ENCODE measurements at regions of chr22 and their contacts with region 1.

Region 1: GRCh38 chr22:35023692-35024363 is 42.1 kb upstream of the ISX start:
- DNase-seq: peak; percentile 45 to 73
- ATAC-seq: peak in 5 of 8 donors; percentile 51 to 75 (median 54)
- H3K4me3 ChIP-seq: no peak overlapping the region
- H3K27ac ChIP-seq: no peak overlapping the region
- H3K4me1 ChIP-seq: no peaks in the 10 kb centered on the region
- H3K27me3 ChIP-seq: peaks cover 5 to 55% (median 28%) of the 10 kb centered on the region in 7 donors
- CTCF ChIP-seq: peak; percentile 70 to 90 (median 87)

Region 2: DNA sequence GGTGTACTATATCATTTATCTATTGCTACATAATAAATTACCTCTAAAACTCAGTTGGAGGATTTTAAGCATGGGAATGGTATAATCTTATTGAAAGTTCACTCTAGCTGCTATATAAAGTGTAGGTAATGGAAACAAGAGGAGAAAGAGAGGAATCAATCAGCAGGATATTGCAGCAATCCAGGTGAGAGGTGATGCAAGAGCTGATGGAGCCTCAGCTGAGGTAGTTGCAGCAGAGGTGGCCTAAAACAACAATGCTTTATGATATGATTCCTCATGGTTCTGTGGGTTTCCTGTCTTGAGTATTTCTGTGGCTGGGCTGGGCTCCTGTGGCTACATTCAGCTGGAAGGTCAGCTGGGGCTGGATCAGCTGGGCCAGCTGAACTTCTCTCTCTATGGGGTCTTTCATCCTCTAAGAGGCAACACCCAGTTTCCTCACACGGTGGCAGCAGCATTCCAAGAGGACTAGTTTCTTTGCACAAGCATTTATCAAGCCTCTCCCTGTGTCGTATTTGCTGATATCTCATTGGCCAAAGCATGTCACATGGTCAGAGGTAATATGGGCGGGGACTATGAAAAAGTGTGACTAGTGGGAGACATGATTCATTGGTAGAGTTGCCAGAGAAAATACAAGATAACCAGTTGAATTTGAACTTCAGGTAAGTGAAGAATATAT is 968.2 kb before region 1 on chr22:
- intact Hi-C with region 1: loop called in 1 of 10 experiments (anchors 5 kb)
- DNase-seq: no peak
- ATAC-seq: peak in 1 of 8 donors; percentile 27
- H3K4me3 ChIP-seq: no peak overlapping the region
- H3K27ac ChIP-seq: no peak overlapping the region
- H3K4me1 ChIP-seq: no peaks in the 10 kb centered on the region
- H3K27me3 ChIP-seq: peaks cover 0 to 17% (median 0%) of the 10 kb centered on the region in 7 donors
- CTCF ChIP-seq: peak in 5 of 9 donors; percentile 11 to 29 (median 20)

Region 3: GRCh38 chr22:34414484-34415440 is 609.1 kb before region 1 on chr22:
- intact Hi-C with region 1: loop called in 5 of 10 experiments (anchors 5 to 10 kb)
- DNase-seq: peak in 1 of 2 donors; percentile 12
- ATAC-seq: peak in 3 of 8 donors; percentile 47 to 75 (median 48)
- H3K4me3 ChIP-seq: no peak overlapping the region
- H3K27ac ChIP-seq: no peak overlapping the region
- H3K4me1 ChIP-seq: no peaks in the 10 kb centered on the region
- H3K27me3 ChIP-seq: peaks cover 0 to 18% (median 0%) of the 10 kb centered on the region in 7 donors
- CTCF ChIP-seq: peak in 7 of 9 donors; percentile 33 to 56 (median 48)

Region 4: GRCh38 chr22:35076630-35077029 is 52.8 kb after region 1 on chr22:
- intact Hi-C with region 1: no loop called
- DNase-seq: no peak
- ATAC-seq: no peak
- H3K4me3 ChIP-seq: no peak overlapping the region
- H3K27ac ChIP-seq: no peak overlapping the region
- H3K4me1 ChIP-seq: no peaks in the 10 kb centered on the region
- H3K27me3 ChIP-seq: peaks cover 0 to 17% (median 4%) of the 10 kb centered on the region in 7 donors
- CTCF ChIP-seq: no peak

Region 5: GRCh38 chr22:35150183-35151107 is 126.6 kb after region 1 on chr22:
- intact Hi-C with region 1: loop called in 1 of 10 experiments (anchors 5 kb)
- DNase-seq: peak; percentile 50 to 58
- ATAC-seq: peak; percentile 28 to 81 (median 64)
- H3K4me3 ChIP-seq: no peak overlapping the region
- H3K27ac ChIP-seq: no peak overlapping the region
- H3K4me1 ChIP-seq: peaks cover 0 to 9% (median 0%) of the 10 kb centered on the region in 9 donors
- H3K27me3 ChIP-seq: peaks cover 0 to 32% (median 25%) of the 10 kb centered on the region in 7 donors
- CTCF ChIP-seq: peak; percentile 52 to 84 (median 75)